Activated CD4-positive, alpha-beta memory T cell treated with anti-CD3 and anti-CD28 coated beads for 36 hours (primary cell): ENCODE measurements at regions of chr18 and their contacts with region 1.

Region 1: DNA sequence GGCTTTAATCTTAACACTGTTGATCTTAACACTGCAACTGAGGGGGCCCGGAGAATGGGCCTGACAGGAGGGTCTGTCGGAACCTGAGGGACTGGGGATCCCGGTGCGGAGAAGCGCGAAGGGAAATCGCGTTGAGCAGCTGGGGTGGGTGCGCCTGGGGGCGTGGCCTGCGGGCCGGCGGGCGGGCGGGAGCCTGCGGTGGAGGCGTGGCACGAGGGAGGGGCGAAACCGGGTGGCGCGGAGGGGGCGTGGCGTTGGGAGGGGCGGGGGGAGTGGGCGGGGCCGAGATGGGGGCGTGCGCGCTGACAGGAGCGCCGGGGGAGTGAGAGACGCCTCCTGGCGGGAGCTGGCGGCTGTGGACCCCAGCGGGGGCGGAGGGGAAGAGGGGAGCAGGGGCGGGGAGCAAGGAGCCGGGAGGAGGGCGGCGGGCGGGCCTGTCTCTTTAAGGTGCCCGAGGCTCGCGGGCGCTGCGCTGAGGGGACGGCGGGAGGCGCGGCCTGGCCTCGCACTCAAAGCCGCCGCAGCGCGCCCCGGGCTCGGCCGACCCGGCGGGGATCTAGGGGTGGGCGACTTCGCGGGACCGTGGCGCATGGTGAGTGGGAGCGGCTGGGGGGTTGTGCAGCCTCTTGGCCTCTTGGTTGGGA is at the start of gene TWSG1:
- DNase-seq: peak; percentile 93
- H3K4me3 Mint-ChIP-seq: peak within 1 kb of the TSS; percentile 83
- H3K27ac Mint-ChIP-seq: peak within 1 kb of the TSS; percentile 47
- H3K4me1 Mint-ChIP-seq: peaks cover 20% of the 10 kb centered on the region
- H3K27me3 Mint-ChIP-seq: peaks cover 6% of the 10 kb centered on the region
- total RNA-seq, gene TWSG1: 11.0 to 12.2 TPM

Region 2: DNA sequence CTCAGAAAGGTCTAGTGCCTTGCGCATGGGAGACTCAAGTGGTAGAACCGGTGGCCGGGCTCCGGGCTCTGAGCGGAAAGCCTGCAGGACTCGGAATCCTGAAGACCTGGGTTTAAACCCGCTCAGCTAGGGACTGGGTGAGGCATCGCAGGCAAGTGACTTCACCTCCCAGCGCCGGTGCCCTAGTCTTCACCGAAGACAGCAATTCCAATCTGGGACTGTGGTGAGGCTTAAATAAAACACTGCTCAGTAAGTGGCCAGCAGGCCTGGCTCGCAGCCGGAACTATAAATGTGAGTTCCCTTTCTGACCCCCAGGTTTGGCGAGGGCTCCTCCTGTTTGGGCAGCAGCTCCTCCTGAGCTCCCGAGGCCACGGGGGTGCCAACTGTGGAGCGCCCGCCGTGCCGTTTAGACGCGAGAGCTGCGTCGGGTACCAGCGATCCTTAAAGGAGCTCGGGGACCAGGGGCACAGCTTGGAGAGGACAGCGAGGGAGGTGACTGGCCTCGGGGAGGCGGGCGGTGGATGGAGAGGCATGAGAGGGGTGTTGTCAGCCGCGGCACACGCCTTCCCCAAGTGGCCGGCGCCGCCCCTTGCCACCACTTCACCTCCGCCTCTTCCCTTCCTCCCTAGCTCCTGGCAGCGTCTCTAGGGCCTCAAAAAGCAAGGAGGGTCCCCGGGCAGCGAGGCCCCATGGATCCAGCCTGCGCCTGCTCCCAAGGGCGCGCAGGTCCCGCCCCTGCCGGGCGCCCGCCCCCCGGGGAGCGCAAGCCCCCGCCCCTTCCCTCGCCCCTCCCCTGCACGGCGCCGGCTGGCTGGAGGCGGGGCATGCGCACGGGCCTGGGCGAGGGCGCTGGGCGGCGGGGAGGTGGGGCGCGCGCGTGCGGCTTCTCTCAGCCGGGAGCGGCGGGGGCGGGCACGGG is 629.8 kb before region 1 on chr18:
- CTCF ChIA-PET with region 1: no interaction called
- POLR2A ChIA-PET with region 1: no interaction called
- intact Hi-C with region 1: loop called (anchors 2 kb)
- DNase-seq: peak; percentile 85
- H3K4me3 Mint-ChIP-seq: peak overlapping the region; percentile 84
- H3K27ac Mint-ChIP-seq: no peak overlapping the region
- H3K4me1 Mint-ChIP-seq: peaks cover 14% of the 10 kb centered on the region
- H3K27me3 Mint-ChIP-seq: peaks cover 46% of the 10 kb centered on the region

Region 3: DNA sequence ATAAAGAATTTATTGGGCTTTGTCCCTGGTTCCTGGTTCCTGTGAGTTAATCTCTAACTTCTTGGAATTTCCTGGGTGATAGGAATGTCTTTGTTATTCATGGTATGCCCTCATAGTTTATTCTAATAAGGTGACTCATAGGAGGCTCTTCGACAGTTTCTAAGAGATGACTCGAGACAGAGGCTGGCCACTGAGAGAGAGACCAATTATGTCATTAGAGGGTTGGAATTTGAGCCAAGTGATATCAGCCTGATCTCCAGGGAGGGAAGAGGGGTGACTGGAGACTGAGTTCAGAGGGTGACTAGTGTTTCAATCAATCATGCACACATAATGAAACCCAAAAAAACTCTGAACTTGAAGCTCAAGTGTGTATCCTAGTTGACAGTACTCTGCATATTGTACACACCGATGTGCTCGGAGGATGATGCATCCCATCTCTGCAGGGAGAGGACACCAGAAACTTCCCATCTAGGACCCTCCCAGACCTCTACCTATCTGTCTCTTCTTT is 443.4 kb before region 1 on chr18:
- CTCF ChIA-PET with region 1: no interaction called
- POLR2A ChIA-PET with region 1: no interaction called
- intact Hi-C with region 1: no loop called
- DNase-seq: no peak
- H3K4me3 Mint-ChIP-seq: no peak overlapping the region
- H3K27ac Mint-ChIP-seq: no peak overlapping the region
- H3K4me1 Mint-ChIP-seq: no peaks in the 10 kb centered on the region
- H3K27me3 Mint-ChIP-seq: peaks cover 9% of the 10 kb centered on the region

Region 4: DNA sequence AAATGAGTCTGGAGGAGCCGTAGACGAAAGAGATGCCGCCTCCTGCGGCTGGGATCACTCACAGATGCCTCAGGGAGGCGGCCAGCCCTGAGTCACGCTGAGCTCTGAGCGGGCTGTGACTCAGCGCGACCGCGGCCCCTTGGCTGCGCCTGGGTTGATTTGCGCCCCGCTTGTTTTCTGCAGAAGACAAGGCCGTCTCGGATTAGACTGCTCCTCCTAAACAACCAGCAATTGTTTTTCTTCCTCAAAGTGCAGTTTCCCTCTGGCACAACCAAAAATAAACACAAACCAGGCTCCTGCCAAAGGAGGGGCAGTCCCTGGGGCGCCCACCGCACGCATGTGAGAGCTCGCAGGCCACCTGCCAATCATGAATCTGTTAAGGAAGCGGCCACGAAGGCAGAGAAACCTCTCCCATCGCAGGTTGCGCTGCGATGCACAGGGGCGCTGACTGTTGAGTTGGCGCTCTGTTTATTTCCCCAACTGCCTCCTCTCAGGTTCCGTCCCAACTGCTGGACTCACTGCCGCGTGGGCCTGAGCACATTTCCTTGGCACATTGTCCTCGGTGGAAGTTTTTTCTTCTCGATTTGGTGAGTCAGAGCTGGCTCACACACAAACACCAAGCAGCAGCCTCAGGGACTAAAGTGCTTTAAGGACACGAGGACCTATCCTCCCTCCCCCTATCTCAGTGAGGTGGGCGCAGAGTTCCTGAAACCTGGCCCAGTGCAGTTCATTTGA is 317.1 kb before region 1 on chr18:
- CTCF ChIA-PET with region 1: no interaction called
- POLR2A ChIA-PET with region 1: no interaction called
- intact Hi-C with region 1: loop called (anchors 5 kb)
- DNase-seq: peak; percentile 89
- H3K4me3 Mint-ChIP-seq: peak overlapping the region; percentile 61
- H3K27ac Mint-ChIP-seq: peak overlapping the region; percentile 74
- H3K4me1 Mint-ChIP-seq: peaks cover 14% of the 10 kb centered on the region
- H3K27me3 Mint-ChIP-seq: peaks cover 5% of the 10 kb centered on the region

Region 5: GRCh38 chr18:9240270-9240669 is 94.2 kb before region 1 on chr18:
- CTCF ChIA-PET with region 1: no interaction called
- POLR2A ChIA-PET with region 1: no interaction called
- intact Hi-C with region 1: loop called (anchors 5 kb)
- DNase-seq: no peak
- H3K4me3 Mint-ChIP-seq: no peak overlapping the region
- H3K27ac Mint-ChIP-seq: peak overlapping the region; percentile 61
- H3K4me1 Mint-ChIP-seq: peaks cover 27% of the 10 kb centered on the region
- H3K27me3 Mint-ChIP-seq: no peaks in the 10 kb centered on the region

Region 6: DNA sequence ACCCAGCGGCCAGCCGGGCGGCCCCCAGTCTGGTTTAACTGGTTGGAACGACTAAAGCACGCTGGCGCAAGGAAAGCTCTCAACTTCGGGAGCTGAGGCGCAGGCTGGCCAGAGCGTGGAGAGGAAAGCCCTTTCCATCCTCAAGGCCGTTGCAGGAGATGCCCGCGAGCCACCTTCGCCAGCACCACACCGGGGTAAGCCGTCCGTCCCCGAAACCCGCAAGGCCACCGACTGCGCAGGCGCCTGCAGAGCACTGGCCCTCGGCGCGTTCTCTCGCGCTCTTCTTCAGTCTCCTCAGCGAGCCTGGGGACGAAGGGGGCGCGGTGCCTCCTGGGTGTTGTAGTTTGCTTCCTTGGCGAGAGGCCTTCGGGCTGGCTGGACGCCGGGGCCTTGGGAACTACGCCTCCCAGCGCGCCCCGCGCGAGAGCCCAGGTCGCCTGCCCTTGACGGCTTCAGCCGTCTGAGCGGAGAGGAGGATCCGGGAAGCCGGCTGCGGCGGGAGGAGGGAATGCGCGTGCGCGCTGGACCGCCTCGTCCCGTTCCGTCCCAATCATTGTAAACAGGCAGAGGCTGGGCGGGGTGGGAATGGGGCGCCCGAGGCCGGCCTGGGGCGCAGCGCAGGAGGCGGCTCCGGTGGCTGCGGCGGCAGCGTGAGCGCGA is 140.7 kb after region 1 on chr18 and contains the start of gene RALBP1:
- CTCF ChIA-PET with region 1: no interaction called
- POLR2A ChIA-PET with region 1: no interaction called
- intact Hi-C with region 1: loop called (anchors 1 kb)
- DNase-seq: peak; percentile 99
- H3K4me3 Mint-ChIP-seq: peak within 1 kb of the TSS; percentile 92
- H3K27ac Mint-ChIP-seq: peak within 1 kb of the TSS; percentile 93
- H3K4me1 Mint-ChIP-seq: peaks cover 28% of the 10 kb centered on the region
- H3K27me3 Mint-ChIP-seq: peaks cover 11% of the 10 kb centered on the region
- total RNA-seq, gene RALBP1: 53.1 to 54.7 TPM

Region 7: GRCh38 chr18:9516437-9517064 is 182.1 kb after region 1 on chr18:
- CTCF ChIA-PET with region 1: interaction called, 11 read pairs
- POLR2A ChIA-PET with region 1: no interaction called
- intact Hi-C with region 1: loop called (anchors 1 kb)
- DNase-seq: no peak
- H3K4me3 Mint-ChIP-seq: no peak overlapping the region
- H3K27ac Mint-ChIP-seq: no peak overlapping the region
- H3K4me1 Mint-ChIP-seq: peaks cover 3% of the 10 kb centered on the region
- H3K27me3 Mint-ChIP-seq: no peaks in the 10 kb centered on the region

Region 8: DNA sequence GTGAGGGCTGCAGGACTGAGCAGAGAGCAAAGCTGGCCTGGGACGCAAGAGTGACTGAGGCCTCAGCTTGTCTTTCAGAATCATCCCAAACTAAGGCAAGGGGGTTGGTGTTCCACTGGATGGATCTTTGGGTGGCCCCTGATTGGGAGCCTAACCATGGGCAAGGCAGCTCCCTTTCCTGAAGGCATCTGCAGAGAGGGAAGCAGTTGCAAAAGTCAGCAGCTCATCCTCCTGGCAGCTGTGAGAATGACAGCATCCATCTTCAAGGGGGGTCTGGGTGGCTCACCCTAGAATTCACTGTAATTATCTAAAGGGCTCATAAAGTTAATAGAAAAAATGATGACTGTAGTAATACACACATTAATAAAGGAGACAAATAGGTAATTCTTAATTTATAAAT is 327.1 kb after region 1 on chr18:
- CTCF ChIA-PET with region 1: no interaction called
- POLR2A ChIA-PET with region 1: no interaction called
- intact Hi-C with region 1: no loop called
- DNase-seq: no peak
- H3K4me3 Mint-ChIP-seq: no peak overlapping the region
- H3K27ac Mint-ChIP-seq: no peak overlapping the region
- H3K4me1 Mint-ChIP-seq: no peaks in the 10 kb centered on the region
- H3K27me3 Mint-ChIP-seq: no peaks in the 10 kb centered on the region

Region 9: DNA sequence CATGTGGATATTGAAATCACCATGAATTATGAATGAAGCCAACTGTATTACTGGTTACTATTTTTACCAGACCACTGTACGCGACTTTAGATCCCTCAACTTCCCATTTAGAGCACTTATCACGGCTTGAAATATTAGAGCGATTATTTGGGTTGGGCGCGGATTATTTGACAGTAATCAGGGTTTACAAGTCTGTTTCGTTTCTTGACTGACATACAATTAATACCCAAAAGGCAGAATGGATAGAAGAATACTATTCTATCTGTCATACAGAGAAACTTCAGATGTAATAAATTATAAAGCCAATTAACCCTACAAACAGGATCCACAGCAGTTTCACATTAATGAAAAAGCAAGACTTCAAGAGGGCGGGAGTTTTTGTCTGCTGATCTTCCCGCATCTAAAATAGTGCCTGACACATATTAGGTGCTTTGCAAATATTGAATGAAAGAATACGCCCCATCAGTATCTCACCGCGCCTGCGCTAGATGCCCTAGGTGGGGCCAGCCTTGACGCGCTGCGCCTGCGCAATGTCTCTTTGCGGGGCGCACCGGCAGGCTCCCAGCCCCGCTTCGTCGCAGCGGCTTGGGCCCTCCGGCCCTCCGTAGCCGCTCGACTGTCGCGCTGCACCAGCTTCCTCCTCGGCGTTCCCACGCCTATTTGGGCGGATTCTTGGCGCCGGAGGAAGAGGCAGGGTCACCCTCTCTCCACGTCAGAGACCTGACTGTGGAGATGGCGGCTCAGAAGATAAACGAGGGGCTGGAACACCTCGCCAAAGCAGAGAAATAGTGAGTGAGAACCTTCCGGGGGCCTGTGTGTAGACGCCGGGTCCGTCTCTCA is 1191.1 kb after region 1 on chr18 and contains the start of gene NAPG:
- CTCF ChIA-PET with region 1: no interaction called
- POLR2A ChIA-PET with region 1: no interaction called
- intact Hi-C with region 1: loop called (anchors 10 kb)
- DNase-seq: peak; percentile 93
- H3K4me3 Mint-ChIP-seq: peak within 1 kb of the TSS; percentile 94
- H3K27ac Mint-ChIP-seq: peak within 1 kb of the TSS; percentile 95
- H3K4me1 Mint-ChIP-seq: peaks cover 45% of the 10 kb centered on the region
- H3K27me3 Mint-ChIP-seq: no peaks in the 10 kb centered on the region
- total RNA-seq, gene NAPG: 31.8 to 32.7 TPM